ENCODE measurements at regions of chr17 and their contacts with region 1.

Region 1: GRCh38 chr17:76384222-76384986 is at the start of gene SPHK1:
- DNase-seq: peak; percentile 91
- H3K4me3 ChIP-seq: peak within 1 kb of the TSS; percentile 53 to 78
- H3K27ac ChIP-seq: peak within 1 kb of the TSS in 1 of 2 experiments; percentile 80; a peak in 2 of 4 replicates
- H3K4me1 ChIP-seq: peaks cover 0 to 40% of the 10 kb centered on the region in 2 experiments; a peak in 1 of 4 replicates
- H3K27me3 ChIP-seq: no peaks in the 10 kb centered on the region
- CTCF ChIP-seq: no peak
- EP300 ChIP-seq: no peak
- RAD21 ChIP-seq: no peak
- polyA plus RNA-seq, gene SPHK1: 7.7 and 12.3 TPM in 2 replicates

Region 2: GRCh38 chr17:76014184-76014924 is 370.1 kb before region 1 on chr17:
- CTCF ChIA-PET with region 1: interaction called, 13 read pairs
- POLR2A ChIA-PET with region 1: no interaction called
- DNase-seq: peak; percentile 97
- H3K4me3 ChIP-seq: no peak overlapping the region
- H3K27ac ChIP-seq: no peak overlapping the region
- H3K4me1 ChIP-seq: peaks cover 10 to 13% of the 10 kb centered on the region in 2 experiments; a peak in 2 of 4 replicates
- H3K27me3 ChIP-seq: no peaks in the 10 kb centered on the region
- CTCF ChIP-seq: peak; percentile 99
- EP300 ChIP-seq: no peak
- RAD21 ChIP-seq: peak; percentile 95

Region 3: GRCh38 chr17:76314392-76315227 is 69.8 kb before region 1 on chr17:
- CTCF ChIA-PET with region 1: interaction called, 303 read pairs
- POLR2A ChIA-PET with region 1: no interaction called
- DNase-seq: no peak
- H3K4me3 ChIP-seq: no peak overlapping the region
- H3K27ac ChIP-seq: peak overlapping the region in 1 of 2 experiments; percentile 26; a peak in 1 of 4 replicates
- H3K4me1 ChIP-seq: peaks cover 0 to 7% of the 10 kb centered on the region in 2 experiments; a peak in 1 of 4 replicates
- H3K27me3 ChIP-seq: no peaks in the 10 kb centered on the region
- CTCF ChIP-seq: no peak
- EP300 ChIP-seq: no peak
- RAD21 ChIP-seq: no peak

Region 4: GRCh38 chr17:76345377-76345974 is 38.9 kb before region 1 on chr17:
- CTCF ChIA-PET with region 1: interaction called, 128 read pairs
- POLR2A ChIA-PET with region 1: no interaction called
- DNase-seq: no peak
- H3K4me3 ChIP-seq: no peak overlapping the region
- H3K27ac ChIP-seq: peak overlapping the region in 1 of 2 experiments; percentile 17; a peak in 1 of 4 replicates
- H3K4me1 ChIP-seq: no peaks in the 10 kb centered on the region
- H3K27me3 ChIP-seq: no peaks in the 10 kb centered on the region
- CTCF ChIP-seq: no peak
- EP300 ChIP-seq: no peak
- RAD21 ChIP-seq: no peak

Region 5: GRCh38 chr17:76370261-76370993 is 14.0 kb before region 1 on chr17:
- CTCF ChIA-PET with region 1: interaction called, 114 read pairs
- POLR2A ChIA-PET with region 1: no interaction called
- DNase-seq: peak; percentile 65
- H3K4me3 ChIP-seq: no peak overlapping the region
- H3K27ac ChIP-seq: peak overlapping the region in 1 of 2 experiments; percentile 87; a peak in 2 of 4 replicates
- H3K4me1 ChIP-seq: peaks cover 7 to 24% of the 10 kb centered on the region in 2 experiments; a peak in 2 of 4 replicates
- H3K27me3 ChIP-seq: no peaks in the 10 kb centered on the region
- CTCF ChIP-seq: peak; percentile 93
- EP300 ChIP-seq: peak in 1 of 2 experiments; percentile 73; a peak in 1 of 4 replicates
- RAD21 ChIP-seq: no peak; the same call in 1 of the 2 replicates

Region 6: DNA sequence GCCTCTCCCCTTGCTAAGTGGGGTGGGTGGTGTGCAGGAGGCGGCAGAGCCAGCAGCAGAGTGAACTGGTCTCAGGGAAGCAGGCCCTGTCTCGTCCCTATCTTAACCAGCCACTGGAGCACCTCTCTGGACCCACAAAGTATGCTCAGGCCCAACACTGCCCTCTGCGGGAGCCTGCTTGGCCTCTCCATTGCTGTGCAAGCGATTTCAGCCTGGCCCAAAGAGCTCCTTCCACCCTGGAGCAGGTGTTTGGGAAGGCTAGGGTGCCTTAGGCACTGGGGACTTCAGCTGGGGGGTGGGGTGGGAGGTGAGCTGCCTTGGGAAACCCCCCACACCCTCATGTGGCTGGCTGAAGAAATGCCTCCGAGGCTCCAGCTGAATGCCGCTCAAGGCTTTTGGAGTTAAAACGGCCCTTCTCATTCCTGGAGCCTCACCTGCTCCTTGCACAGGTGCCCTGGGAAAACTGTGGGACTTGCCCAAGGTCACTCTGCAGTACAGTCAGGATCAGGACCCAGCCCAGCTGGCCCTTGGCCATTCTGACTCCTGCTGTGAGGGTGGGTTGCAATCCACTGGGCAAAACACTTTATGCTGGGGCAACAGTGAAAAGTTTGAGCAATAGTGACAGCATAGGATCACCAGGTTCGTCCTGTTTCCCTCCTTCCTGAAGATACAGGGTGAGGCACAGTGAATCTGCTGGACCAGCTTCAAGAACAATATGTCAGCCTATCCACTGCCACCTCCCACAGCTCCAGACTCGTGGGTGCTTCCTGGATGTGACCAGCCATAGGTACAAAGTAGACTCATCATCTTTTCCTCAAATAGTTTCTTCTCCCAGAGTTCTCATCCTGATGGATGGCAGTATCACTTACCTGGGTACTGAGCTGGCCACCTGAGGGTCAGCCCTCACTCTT is 74.4 kb after region 1 on chr17:
- CTCF ChIA-PET with region 1: interaction called, 26 read pairs
- POLR2A ChIA-PET with region 1: interaction called, 3 read pairs
- DNase-seq: peak; percentile 79
- H3K4me3 ChIP-seq: no peak overlapping the region
- H3K27ac ChIP-seq: no peak overlapping the region
- H3K4me1 ChIP-seq: no peaks in the 10 kb centered on the region; a peak in 1 of 4 replicates
- H3K27me3 ChIP-seq: no peaks in the 10 kb centered on the region
- CTCF ChIP-seq: peak; percentile 51
- EP300 ChIP-seq: no peak
- RAD21 ChIP-seq: peak; percentile 81

Region 7: DNA sequence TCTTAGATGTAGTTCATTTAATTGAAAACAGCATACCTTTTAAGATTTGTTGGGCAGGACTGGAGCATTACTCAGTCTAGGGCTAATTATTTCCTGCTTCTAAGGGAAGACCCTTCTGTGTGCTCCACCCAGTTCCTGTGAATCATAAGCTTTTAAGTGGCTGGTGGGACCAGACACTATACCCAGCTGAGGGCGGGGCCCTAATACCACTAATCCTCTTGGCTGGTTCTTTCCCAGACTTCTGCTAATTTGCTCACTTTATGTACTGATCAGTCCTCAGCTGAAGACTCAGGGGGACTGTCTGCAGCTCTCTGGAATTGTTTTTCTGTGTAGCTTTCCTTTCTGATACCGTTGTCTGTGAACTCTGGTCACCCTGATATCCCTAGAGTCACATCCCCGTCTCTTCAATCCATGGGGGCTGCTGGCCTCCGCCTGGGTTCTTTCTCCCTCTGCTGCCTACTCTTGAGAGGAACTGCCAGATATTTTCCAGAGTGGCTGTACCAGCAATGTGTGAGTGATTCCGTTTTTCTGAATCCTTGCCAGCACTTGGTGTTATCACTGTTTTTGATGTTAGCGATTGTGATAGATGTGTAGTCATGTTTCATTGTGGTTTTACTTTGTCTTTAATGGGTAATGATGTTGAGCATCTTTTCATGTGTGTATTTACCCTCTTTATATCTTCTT is 388.6 kb after region 1 on chr17:
- CTCF ChIA-PET with region 1: no interaction called
- POLR2A ChIA-PET with region 1: no interaction called
- DNase-seq: peak; percentile 64
- H3K4me3 ChIP-seq: peak overlapping the region; percentile 22 to 47; a peak in 3 of 4 replicates
- H3K27ac ChIP-seq: peak overlapping the region; percentile 71 to 88
- H3K4me1 ChIP-seq: peaks cover 5 to 13% of the 10 kb centered on the region in 2 experiments; a peak in 2 of 4 replicates
- H3K27me3 ChIP-seq: no peaks in the 10 kb centered on the region
- CTCF ChIP-seq: peak; percentile 40
- EP300 ChIP-seq: no peak
- RAD21 ChIP-seq: peak; percentile 41; the same call in 1 of the 2 replicates

Measured in SK-N-SH (cell line).